HepG2 (cell line): ENCODE measurements at regions of chr18 and their contacts with region 1.

Region 1: DNA sequence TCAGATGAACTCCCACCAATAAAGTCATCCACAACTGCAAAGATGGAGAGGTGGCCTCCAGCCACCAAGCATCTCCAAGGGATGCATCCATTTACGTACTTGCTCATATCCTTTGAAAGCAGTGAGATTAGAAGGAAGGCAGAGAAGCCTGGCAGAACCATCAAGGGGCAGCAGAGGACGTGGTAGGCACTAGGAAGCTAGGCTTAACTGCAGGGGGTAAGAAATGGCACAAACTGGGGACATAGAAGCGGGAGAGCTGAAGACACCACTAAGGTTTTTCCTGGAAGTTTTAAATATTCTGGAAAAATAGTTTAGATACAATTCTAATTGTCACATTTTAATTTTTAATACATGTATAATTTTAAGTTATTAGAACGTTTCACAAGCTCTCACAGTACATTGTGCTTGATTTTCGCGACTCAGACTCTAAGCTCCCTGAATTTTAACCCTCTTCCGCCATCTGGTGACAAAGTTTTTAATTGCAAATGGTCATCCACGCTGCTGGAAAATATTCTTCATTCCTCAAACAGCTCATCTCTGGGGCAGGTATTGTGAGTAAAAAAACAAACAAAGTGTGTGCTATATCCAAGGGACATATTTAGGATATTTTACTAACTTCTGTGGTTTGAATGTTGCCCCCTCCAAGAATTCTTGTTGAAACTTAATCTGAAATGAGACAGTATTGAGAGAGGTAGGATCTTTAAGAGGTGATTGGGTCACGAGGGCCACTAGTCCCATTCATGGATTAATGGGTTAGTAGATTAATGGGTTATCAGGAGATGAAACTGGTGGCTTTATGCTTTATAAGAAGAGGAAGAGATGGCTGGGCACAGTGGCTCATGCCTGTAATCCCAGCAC is 1.6 kb upstream of the PSTPIP2 start:
- DNase-seq: peak; percentile 62
- ATAC-seq: peak; percentile 52
- H3K4me3 ChIP-seq: no peak overlapping the region
- H3K27ac ChIP-seq: no peak overlapping the region
- H3K4me1 ChIP-seq: peaks cover 21% of the 10 kb centered on the region
- H3K27me3 ChIP-seq: peaks cover 12 to 39% of the 10 kb centered on the region in 2 experiments; a peak in 4 of 5 replicates
- CTCF ChIP-seq: peak; percentile 72
- EP300 ChIP-seq: no peak
- POLR2A ChIP-seq: no peak
- RAD21 ChIP-seq: peak; percentile 35; the same call in 1 of the 2 replicates

Region 2: GRCh38 chr18:45664824-45665763 is 408.6 kb before region 1 on chr18:
- CTCF ChIA-PET with region 1: interaction called, 6 read pairs
- POLR2A ChIA-PET with region 1: no interaction called
- in situ Hi-C with region 1: no loop called
- intact Hi-C with region 1: loop called (anchors 2 kb)
- DNase-seq: peak; percentile 28
- ATAC-seq: peak; percentile 83
- H3K4me3 ChIP-seq: no peak overlapping the region
- H3K27ac ChIP-seq: no peak overlapping the region
- H3K4me1 ChIP-seq: peaks cover 7% of the 10 kb centered on the region
- H3K27me3 ChIP-seq: peaks cover 0 to 9% of the 10 kb centered on the region in 2 experiments; a peak in 2 of 5 replicates
- CTCF ChIP-seq: peak; percentile 75
- EP300 ChIP-seq: no peak
- POLR2A ChIP-seq: no peak
- RAD21 ChIP-seq: no peak

Region 3: GRCh38 chr18:45690975-45691815 is 382.5 kb before region 1 on chr18:
- CTCF ChIA-PET with region 1: interaction called, 3 read pairs
- POLR2A ChIA-PET with region 1: no interaction called
- in situ Hi-C with region 1: loop called (anchors 10 kb)
- intact Hi-C with region 1: loop called (anchors 1 kb)
- DNase-seq: peak; percentile 46
- ATAC-seq: peak; percentile 97
- H3K4me3 ChIP-seq: no peak overlapping the region
- H3K27ac ChIP-seq: no peak overlapping the region
- H3K4me1 ChIP-seq: no peaks in the 10 kb centered on the region
- H3K27me3 ChIP-seq: no peaks in the 10 kb centered on the region; a peak in 2 of 5 replicates
- CTCF ChIP-seq: peak; percentile 92
- EP300 ChIP-seq: no peak
- POLR2A ChIP-seq: no peak
- RAD21 ChIP-seq: peak; percentile 68

Region 4: DNA sequence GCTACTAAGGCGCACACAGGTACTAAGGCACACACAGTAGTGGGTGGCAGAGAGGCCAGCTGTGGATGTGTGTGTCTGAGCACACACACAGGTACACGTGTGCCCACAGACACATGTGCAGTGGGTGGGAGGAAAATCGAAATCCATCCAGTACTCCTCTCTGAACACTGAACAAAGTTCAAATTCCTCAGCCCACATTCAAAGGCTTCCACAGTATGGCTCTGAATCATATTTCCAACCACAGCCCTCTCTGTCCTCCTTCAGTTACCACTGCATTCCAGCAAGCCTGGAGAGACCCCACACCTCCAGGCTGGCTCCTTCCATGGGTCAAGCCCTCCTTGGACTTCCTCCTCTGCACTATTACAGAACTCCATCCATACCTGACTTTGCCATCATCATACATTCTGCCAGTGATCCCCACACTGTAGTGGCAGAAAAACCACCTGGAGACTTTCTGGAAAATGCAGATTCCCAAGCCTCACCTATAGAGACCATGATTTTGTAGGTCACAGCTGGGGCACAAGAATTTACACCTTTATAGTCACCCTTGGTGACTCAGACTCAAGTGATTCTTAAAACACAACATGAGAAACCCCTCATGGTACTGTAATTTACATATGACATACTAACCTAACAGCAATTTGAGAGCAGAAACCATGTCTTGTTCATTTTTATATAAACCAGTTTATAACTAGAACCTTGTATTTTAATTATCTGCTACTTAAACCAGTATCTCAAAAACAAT is 137.9 kb before region 1 on chr18:
- CTCF ChIA-PET with region 1: no interaction called
- POLR2A ChIA-PET with region 1: no interaction called
- in situ Hi-C with region 1: no loop called
- intact Hi-C with region 1: loop called (anchors 10 kb)
- DNase-seq: peak; percentile 54
- ATAC-seq: peak; percentile 95
- H3K4me3 ChIP-seq: no peak overlapping the region
- H3K27ac ChIP-seq: peak overlapping the region; percentile 27
- H3K4me1 ChIP-seq: peaks cover 14% of the 10 kb centered on the region
- H3K27me3 ChIP-seq: no peaks in the 10 kb centered on the region
- CTCF ChIP-seq: no peak
- EP300 ChIP-seq: no peak
- POLR2A ChIP-seq: no peak
- RAD21 ChIP-seq: no peak

Region 5: DNA sequence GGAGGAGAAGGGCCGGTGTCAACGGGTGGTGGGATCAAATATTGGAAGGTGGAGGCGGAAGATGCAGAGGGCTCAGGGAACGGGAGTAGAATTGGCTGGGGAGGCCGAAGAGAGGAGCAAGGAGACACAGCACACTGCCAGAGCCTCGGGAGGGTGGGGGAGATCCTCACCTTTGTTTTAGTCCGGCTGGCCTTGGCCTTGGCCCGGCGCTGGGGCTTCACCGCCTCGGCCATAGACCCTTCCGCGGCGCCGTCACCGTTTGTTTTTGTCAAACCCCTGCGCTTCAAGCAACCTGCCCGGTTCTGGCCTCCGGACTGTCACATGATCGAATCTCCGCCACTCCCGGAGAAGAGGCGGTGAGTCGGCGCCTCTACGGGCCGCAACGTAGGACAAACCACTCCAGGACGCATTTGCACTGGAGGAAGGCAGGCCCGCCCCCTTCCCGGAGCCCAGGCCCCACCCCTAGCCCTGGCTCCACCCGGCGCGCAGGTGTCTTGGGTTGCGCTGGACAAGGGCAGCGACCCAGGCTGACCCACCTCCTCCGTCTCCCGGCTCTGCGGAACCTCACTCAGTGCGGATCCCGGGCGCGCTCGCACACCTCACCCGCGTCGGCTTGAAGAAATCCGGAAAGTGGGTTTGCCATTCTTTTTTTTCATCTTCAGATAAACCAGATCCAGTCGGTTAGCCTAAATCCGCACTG is 106.5 kb before region 1 on chr18 and contains the start of gene EPG5:
- CTCF ChIA-PET with region 1: no interaction called
- POLR2A ChIA-PET with region 1: no interaction called
- in situ Hi-C with region 1: loop called (anchors 5 kb)
- intact Hi-C with region 1: loop called (anchors 5 kb)
- DNase-seq: peak; percentile 93
- ATAC-seq: peak; percentile 99
- H3K4me3 ChIP-seq: peak within 1 kb of the TSS; percentile 96 to 100 (median 97)
- H3K27ac ChIP-seq: peak within 1 kb of the TSS; percentile 73
- H3K4me1 ChIP-seq: peaks cover 29% of the 10 kb centered on the region
- H3K27me3 ChIP-seq: no peaks in the 10 kb centered on the region; a peak in 1 of 5 replicates
- CTCF ChIP-seq: no peak
- EP300 ChIP-seq: no peak
- POLR2A ChIP-seq: peak; percentile 68 to 74
- RAD21 ChIP-seq: no peak
- total RNA-seq, gene EPG5: 6.7 and 13.3 TPM in 2 replicates

Region 6: DNA sequence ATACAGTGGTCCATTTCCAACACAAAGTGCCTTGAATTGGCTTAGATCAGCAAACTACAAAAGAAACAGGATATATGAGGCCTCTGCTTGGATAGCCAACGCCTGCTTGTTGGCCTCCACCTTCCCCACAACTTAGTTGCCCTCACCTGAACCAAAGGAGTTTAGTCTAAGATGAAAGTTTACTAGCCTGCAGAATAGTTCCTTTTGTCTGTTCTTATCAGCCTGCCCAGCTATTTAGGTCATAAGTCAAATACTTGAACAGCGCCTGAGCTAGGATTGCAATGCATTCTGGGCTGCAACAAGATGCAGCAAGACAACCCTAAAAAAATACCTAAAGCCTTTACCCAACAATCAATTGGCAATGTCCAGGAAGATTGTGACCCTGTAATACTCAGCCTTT is 93.5 kb before region 1 on chr18:
- CTCF ChIA-PET with region 1: no interaction called
- POLR2A ChIA-PET with region 1: no interaction called
- in situ Hi-C with region 1: no loop called
- intact Hi-C with region 1: loop called (anchors 1 kb)
- DNase-seq: no peak
- ATAC-seq: no peak; the same call in 1 of the 3 replicates
- H3K4me3 ChIP-seq: no peak overlapping the region
- H3K27ac ChIP-seq: no peak overlapping the region
- H3K4me1 ChIP-seq: peaks cover 14% of the 10 kb centered on the region
- H3K27me3 ChIP-seq: no peaks in the 10 kb centered on the region
- CTCF ChIP-seq: no peak
- EP300 ChIP-seq: no peak
- POLR2A ChIP-seq: no peak
- RAD21 ChIP-seq: no peak

Region 7: GRCh38 chr18:46113814-46114213 is 40.1 kb after region 1 on chr18:
- CTCF ChIA-PET with region 1: no interaction called
- POLR2A ChIA-PET with region 1: no interaction called
- in situ Hi-C with region 1: no loop called
- intact Hi-C with region 1: no loop called
- DNase-seq: no peak
- ATAC-seq: no peak
- H3K4me3 ChIP-seq: no peak overlapping the region
- H3K27ac ChIP-seq: no peak overlapping the region
- H3K4me1 ChIP-seq: no peaks in the 10 kb centered on the region
- H3K27me3 ChIP-seq: no peaks in the 10 kb centered on the region
- CTCF ChIP-seq: no peak
- EP300 ChIP-seq: no peak
- POLR2A ChIP-seq: no peak
- RAD21 ChIP-seq: no peak